ENCODE measurements at regions of chr1 and their contacts with region 1.

Region 1: DNA sequence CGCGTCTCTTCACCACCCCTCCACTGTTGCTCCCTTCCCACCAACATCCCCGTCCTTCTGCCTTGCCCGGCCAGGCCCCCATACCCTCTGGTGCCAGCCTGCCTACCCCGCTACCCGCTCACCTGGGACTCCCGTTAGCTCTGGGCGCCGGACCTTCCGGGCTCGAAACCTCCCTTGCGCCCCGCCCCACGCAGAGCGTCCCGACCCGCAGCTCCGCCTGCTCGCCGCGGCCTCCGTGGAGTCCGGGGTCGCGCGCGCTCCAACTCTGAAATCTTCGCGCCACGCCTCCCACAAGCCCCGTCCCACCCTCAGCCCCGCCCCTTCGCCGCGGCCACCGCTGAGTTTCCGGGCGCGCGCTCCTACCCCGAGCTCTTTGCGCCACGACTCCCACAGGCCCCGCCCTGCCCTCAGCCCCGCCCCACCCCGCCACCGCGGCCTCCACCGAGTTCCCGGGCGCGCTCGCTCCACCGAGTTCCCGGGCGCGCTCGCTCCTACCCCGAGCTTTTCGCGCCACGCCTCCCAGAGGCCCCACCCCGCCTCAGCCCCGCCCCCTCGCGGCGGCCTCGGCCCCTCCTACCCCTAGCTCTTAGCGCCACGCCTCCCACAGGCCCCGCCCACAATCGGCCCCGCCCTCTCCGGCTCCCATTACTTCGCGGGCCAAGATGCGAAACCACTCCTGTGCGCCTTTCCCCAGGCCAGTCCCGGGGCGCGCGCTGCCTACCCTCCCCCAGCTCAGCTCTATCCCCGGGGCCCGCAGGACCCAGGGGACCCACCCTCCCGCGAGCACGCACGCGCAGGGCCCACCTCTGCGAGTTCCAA is at the start of gene IFT25:
- DNase-seq: peak; percentile 97 to 99
- ATAC-seq: peak; percentile 95 to 96 (median 96)
- H3K4me3 ChIP-seq: peak within 1 kb of the TSS; percentile 90
- H3K27ac ChIP-seq: peak within 1 kb of the TSS; percentile 89
- H3K4me1 ChIP-seq: peaks cover 20% of the 10 kb centered on the region
- H3K27me3 ChIP-seq: no peaks in the 10 kb centered on the region
- CTCF ChIP-seq: no peak
- total RNA-seq, gene IFT25: 4.9 to 5.8 (median 5.5) TPM

Region 2: DNA sequence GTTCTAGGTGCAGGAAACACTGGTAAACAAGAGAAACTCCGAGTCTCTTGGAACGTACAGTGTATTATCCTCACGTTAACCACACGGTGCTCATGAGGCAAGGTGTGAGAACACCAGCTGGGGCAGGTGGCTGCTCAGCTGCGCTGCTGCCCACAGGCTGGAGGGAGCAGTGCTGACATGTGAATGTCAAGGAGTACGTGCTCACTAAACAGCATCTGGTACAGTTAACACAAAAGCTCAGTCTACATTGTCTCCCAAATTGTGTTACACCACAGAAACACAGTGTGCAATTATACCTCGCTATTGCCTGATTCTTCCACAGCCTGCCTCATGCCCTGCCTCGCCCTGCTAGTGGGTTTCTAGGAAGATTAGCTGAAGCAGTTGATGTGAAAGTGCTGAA is 345.1 kb before region 1 on chr1:
- intact Hi-C with region 1: no loop called
- DNase-seq: peak in 1 of 2 donors; percentile 2
- ATAC-seq: no peak
- H3K4me3 ChIP-seq: no peak overlapping the region
- H3K27ac ChIP-seq: no peak overlapping the region
- H3K4me1 ChIP-seq: no peaks in the 10 kb centered on the region
- H3K27me3 ChIP-seq: no peaks in the 10 kb centered on the region
- CTCF ChIP-seq: no peak

Region 3: GRCh38 chr1:53792806-53793205 is 152.8 kb before region 1 on chr1:
- intact Hi-C with region 1: no loop called
- DNase-seq: no peak
- ATAC-seq: no peak
- H3K4me3 ChIP-seq: no peak overlapping the region
- H3K27ac ChIP-seq: no peak overlapping the region
- H3K4me1 ChIP-seq: no peaks in the 10 kb centered on the region
- H3K27me3 ChIP-seq: no peaks in the 10 kb centered on the region
- CTCF ChIP-seq: no peak

Region 4: GRCh38 chr1:53860967-53861411 is 84.7 kb before region 1 on chr1:
- intact Hi-C with region 1: loop called in 1 of 2 experiments (anchors 5 kb)
- DNase-seq: no peak
- ATAC-seq: peak; percentile 58 to 81 (median 74)
- H3K4me3 ChIP-seq: no peak overlapping the region
- H3K27ac ChIP-seq: no peak overlapping the region
- H3K4me1 ChIP-seq: no peaks in the 10 kb centered on the region
- H3K27me3 ChIP-seq: no peaks in the 10 kb centered on the region
- CTCF ChIP-seq: peak; percentile 79

Region 5: DNA sequence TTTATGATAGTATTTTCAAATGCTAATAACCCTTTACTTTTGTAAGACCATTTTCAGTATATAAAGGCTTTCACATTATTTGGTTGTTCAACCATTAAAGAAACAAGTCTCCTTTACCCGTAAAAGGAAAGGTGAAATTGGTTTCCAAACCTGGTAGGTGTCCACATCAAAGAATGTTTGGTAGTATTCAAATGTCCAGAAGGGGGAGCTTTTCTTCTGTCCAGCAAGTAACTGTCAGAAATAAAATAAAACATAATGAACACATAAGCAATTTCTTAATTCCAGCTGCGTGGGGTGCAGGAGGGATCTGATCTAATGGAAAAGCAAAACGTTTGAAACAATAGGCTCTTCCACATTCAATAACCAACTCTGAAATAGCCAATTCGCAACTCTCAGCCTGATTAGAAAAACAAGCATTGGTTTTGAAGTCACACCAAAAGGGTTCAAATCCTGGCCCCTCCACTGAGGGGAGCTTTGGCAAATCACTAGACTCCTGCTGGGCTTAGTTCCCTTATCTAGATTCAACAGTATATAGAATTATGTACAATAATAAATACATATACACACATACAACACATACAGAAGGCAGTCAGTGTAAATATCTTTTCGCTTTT is 67.0 kb before region 1 on chr1:
- intact Hi-C with region 1: loop called in 1 of 2 experiments (anchors 2 kb)
- DNase-seq: no peak
- ATAC-seq: no peak
- H3K4me3 ChIP-seq: no peak overlapping the region
- H3K27ac ChIP-seq: no peak overlapping the region
- H3K4me1 ChIP-seq: no peaks in the 10 kb centered on the region
- H3K27me3 ChIP-seq: no peaks in the 10 kb centered on the region
- CTCF ChIP-seq: peak; percentile 64

Region 6: DNA sequence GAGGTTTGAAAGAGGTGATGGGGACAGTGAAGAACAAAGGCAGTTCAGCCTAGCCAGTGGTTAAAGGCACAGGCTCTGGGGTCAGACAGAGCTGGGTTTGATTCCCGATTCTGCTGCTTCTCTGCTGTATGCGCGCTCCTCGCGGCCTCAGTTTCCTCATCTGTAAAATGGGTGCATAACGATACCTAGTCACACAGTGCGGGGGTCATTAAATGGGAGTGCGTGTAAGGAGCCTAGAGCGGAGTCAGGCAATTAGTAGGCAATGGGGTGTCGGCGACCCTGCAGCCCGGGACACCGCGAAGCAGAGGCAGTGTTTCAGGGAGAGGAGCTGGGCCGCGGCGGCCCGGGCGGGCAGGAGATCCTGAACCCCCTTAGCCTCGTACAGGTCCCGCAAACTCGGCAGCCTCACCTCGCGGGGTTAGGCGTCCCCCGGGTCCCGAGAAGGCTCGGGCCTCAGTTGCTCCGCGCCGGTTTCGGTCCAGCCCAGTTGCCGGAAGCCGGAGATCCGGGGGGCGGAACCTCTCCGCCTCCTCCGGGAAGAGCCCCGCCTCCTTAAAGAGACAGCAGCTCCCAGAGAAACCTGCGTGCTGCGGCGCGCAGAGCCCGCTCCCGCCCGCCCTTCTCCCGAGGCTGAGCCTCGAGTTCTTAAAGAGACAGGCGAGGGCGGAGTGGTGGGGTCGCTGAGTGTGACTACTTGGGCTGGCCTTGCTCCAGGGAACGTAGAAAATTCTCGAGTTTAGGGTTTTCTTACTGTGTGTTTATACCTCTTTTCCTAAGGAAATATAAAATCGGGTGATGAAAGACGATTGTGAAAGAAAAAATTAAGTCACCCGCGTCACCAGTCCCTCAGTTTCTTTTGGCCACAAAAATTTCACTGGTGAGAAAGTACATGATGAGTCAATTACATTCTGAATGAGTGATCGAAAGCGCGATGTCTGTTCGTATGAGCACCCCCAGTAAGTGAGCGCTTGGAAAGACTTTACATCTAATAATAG is 56.0 kb before region 1 on chr1 and contains the start of gene YIPF1:
- intact Hi-C with region 1: loop called (anchors 2 kb)
- DNase-seq: peak; percentile 89 to 94
- ATAC-seq: peak; percentile 99 to 100 (median 99)
- H3K4me3 ChIP-seq: peak within 1 kb of the TSS; percentile 78
- H3K27ac ChIP-seq: peak within 1 kb of the TSS; percentile 90
- H3K4me1 ChIP-seq: peaks cover 3% of the 10 kb centered on the region
- H3K27me3 ChIP-seq: no peaks in the 10 kb centered on the region
- CTCF ChIP-seq: no peak
- total RNA-seq, gene YIPF1: 11.8 to 23.3 (median 19.4) TPM

Region 7: GRCh38 chr1:53902235-53903180 is 43.1 kb before region 1 on chr1:
- intact Hi-C with region 1: no loop called
- DNase-seq: no peak
- ATAC-seq: no peak
- H3K4me3 ChIP-seq: no peak overlapping the region
- H3K27ac ChIP-seq: no peak overlapping the region
- H3K4me1 ChIP-seq: peaks cover 25% of the 10 kb centered on the region
- H3K27me3 ChIP-seq: no peaks in the 10 kb centered on the region
- CTCF ChIP-seq: no peak

Region 8: DNA sequence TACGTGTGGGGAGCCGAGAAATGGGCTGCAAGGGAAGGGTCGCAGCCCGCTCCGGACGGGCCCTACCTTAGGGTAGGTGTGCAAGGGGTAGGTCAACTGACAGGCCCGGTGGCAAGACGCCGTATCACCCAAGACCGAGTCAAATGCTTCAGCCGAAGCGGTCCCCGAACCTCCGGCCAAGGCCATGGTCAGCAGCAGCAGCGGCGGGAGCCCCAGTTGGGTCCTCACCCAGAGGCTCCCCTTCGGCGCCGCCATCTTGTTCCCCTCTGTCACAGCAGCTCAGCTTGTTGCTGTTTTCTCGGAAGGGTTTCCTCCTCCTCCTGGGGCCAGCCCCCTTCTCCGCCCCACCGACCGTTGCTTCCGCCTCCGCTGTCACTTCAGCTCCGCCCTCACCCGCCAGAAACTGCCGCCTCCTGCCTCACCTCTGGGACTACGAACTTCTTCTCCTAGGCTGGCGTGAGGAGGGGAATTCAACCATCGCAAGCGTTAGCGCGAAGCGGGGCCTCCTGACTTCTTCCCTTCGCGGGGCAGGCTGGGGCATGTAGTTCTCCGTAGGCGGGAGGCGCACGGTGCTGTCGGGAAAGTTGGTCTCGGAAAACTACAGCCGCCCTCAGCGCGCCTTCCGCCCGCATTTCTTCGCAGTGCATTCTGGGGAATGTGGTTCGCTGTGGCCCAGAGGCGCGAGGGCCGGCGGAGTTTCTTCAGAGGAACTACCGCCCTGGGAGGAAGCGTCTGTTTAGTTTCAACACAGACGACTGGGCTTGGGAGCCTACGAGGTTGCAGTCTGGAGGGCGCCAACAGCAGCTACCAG is 107.5 kb after region 1 on chr1 and contains the starts of genes TCEANC2 and TMEM59:
- intact Hi-C with region 1: loop called in 1 of 2 experiments (anchors 5 kb)
- DNase-seq: peak; percentile 98 to 99
- ATAC-seq: peak; percentile 94 to 96 (median 95)
- H3K4me3 ChIP-seq: peak within 1 kb of the TSS; percentile 74
- H3K27ac ChIP-seq: peak within 1 kb of the TSS; percentile 91
- H3K4me1 ChIP-seq: peaks cover 41% of the 10 kb centered on the region
- H3K27me3 ChIP-seq: no peaks in the 10 kb centered on the region
- CTCF ChIP-seq: no peak
- total RNA-seq, gene TCEANC2: 5.5 to 10.4 (median 6.6) TPM
- total RNA-seq, gene TMEM59: 166 to 216 (median 182) TPM

Measured in psoas muscle (tissue), 8 donors.